ENCODE measurements at regions of chr16 and their contacts with region 1.

Region 1: DNA sequence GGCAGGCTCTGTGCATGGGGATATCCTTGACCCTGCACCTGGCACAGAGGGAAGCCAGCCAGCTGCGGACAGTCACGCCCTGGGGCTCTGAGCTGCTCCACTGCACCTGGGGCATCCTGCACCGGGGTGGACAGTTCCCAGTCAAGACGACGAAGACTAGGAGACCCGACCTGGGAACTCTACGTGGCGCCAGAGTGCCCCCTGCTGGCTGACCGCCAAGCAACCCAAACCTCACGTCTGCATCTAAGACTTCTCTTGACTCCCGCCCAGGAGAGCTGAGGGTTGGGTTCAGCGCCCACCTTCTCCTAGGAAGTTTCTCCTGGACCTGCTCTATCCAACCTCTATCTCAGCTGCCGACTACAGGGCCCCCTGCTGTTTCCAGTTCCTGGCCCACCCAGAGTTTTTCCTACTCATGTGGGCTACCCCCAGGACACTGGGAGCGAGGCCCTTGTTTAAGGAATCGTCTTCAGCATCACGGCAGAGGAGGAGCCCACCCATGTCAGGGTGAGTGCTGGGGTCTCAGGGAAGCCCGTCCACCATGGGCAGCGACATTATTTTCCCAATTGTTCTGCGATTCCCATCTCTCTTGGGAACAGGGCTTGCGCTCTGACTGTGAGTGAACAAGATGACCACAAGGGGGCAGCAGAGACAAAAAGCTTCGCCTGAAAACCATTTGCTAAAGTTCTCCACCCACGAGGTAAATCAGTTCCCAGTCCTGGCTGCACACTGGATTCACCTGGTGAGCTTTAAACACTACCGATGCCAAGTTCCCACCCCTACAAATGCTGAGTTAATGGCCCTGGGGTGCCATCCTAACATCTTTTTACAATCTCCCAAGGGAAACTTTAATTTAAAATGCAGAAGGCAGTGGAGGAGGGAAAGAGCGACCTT is 29.3 kb downstream of the TLE7 start:
- DNase-seq: peak; percentile 24 to 54 (median 48)
- H3K4me3 ChIP-seq: no peak overlapping the region
- H3K4me3 Mint-ChIP-seq: no peak overlapping the region
- H3K27ac ChIP-seq: no peak overlapping the region
- H3K27ac Mint-ChIP-seq: no peak overlapping the region
- H3K4me1 ChIP-seq: no peaks in the 10 kb centered on the region
- H3K4me1 Mint-ChIP-seq: peaks cover 5% of the 10 kb centered on the region
- H3K27me3 ChIP-seq: peaks cover 0 to 6% of the 10 kb centered on the region in 2 donors
- H3K27me3 Mint-ChIP-seq: peaks cover 23 to 54% (median 27%) of the 10 kb centered on the region in 3 donors
- CTCF ChIP-seq: peak; percentile 94

Region 2: GRCh38 chr16:71499775-71500364 is 87.4 kb after region 1 on chr16:
- intact Hi-C with region 1: loop called (anchors 2 to 5 kb)
- DNase-seq: peak; percentile 27 to 39 (median 31)
- H3K4me3 ChIP-seq: no peak overlapping the region
- H3K4me3 Mint-ChIP-seq: no peak overlapping the region
- H3K27ac ChIP-seq: no peak overlapping the region
- H3K27ac Mint-ChIP-seq: no peak overlapping the region
- H3K4me1 ChIP-seq: no peaks in the 10 kb centered on the region
- H3K4me1 Mint-ChIP-seq: no peaks in the 10 kb centered on the region
- H3K27me3 ChIP-seq: no peaks in the 10 kb centered on the region
- H3K27me3 Mint-ChIP-seq: peaks cover 4 to 9% (median 5%) of the 10 kb centered on the region in 3 donors
- CTCF ChIP-seq: peak; percentile 73

Region 3: DNA sequence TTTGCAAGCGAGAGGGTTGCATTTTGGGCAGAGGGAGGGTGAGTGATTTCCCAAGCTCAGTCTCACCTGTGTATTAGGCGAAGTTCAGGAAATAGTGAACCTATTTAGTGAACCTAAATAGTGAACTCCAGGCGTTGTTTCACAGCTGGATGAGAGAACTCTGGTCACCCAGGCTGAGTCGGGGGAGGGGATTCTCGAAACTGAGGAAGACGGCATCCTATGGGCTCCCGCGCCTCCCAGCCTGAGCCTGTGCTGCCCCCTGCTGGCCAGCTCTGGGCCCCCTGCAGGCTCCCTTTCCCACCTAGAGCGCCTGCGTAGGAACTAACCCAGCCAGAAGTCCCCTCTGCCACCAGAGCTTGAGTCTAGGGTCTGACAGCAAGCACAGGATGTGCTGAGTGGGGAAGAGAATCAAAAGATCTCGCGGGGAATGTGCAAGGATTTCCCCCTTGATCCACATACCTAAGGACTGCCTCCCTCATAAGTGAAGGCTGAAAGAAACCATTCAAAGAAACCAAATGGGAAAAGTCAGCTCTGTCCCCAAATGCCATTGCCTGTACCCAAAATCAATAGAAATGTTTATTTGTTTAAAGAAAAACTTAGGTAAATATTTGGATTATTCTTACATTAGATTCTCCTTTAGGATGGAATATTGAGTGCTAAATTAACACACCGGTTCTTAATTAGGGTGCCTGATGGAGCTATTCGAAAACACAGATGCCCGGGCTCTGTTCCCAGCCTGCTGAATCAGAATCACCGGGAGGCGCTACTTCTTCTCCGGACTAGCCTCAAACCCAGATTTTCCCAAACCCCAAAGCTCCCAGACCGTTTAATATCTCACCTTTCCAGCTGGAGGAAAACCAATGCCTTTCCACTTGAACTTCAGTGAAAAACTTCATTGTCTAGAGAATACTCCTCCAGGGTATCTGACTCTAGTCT is 198.7 kb after region 1 on chr16:
- intact Hi-C with region 1: loop called (anchors 2 to 5 kb)
- DNase-seq: peak; percentile 34 to 57 (median 36)
- H3K4me3 ChIP-seq: no peak overlapping the region
- H3K4me3 Mint-ChIP-seq: peak overlapping the region in 1 of 2 donors; percentile 35
- H3K27ac ChIP-seq: no peak overlapping the region
- H3K27ac Mint-ChIP-seq: no peak overlapping the region
- H3K4me1 ChIP-seq: no peaks in the 10 kb centered on the region
- H3K4me1 Mint-ChIP-seq: no peaks in the 10 kb centered on the region
- H3K27me3 ChIP-seq: peaks cover 0 to 3% of the 10 kb centered on the region in 2 donors
- H3K27me3 Mint-ChIP-seq: peaks cover 13 to 37% (median 17%) of the 10 kb centered on the region in 3 donors
- CTCF ChIP-seq: peak; percentile 92

Region 4: DNA sequence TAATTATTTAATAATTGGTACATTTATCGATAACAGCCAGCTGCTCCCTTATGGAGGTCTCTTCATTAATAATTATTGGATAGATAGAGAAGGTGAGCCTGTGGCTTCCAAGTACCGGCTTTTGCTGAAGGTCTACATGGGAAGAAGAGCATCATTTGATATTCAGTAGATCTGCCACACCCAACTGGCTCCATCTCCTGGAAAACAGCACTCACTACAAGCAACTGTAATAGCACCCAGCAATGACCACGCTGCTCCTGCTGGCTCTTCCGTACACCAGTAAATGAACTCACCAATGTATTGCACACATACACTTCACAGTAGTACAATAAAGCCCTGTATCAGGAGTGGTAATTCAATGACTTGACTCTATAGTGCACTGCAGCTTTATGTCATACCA is 232.9 kb after region 1 on chr16:
- intact Hi-C with region 1: no loop called
- DNase-seq: no peak
- H3K4me3 ChIP-seq: no peak overlapping the region
- H3K4me3 Mint-ChIP-seq: no peak overlapping the region
- H3K27ac ChIP-seq: no peak overlapping the region
- H3K27ac Mint-ChIP-seq: no peak overlapping the region
- H3K4me1 ChIP-seq: no peaks in the 10 kb centered on the region
- H3K4me1 Mint-ChIP-seq: no peaks in the 10 kb centered on the region
- H3K27me3 ChIP-seq: no peaks in the 10 kb centered on the region
- H3K27me3 Mint-ChIP-seq: peaks cover 0 to 1% (median 0%) of the 10 kb centered on the region in 3 donors
- CTCF ChIP-seq: peak; percentile 38